ENCODE measurements at regions of chr9 and their contacts with region 1.

Region 1: DNA sequence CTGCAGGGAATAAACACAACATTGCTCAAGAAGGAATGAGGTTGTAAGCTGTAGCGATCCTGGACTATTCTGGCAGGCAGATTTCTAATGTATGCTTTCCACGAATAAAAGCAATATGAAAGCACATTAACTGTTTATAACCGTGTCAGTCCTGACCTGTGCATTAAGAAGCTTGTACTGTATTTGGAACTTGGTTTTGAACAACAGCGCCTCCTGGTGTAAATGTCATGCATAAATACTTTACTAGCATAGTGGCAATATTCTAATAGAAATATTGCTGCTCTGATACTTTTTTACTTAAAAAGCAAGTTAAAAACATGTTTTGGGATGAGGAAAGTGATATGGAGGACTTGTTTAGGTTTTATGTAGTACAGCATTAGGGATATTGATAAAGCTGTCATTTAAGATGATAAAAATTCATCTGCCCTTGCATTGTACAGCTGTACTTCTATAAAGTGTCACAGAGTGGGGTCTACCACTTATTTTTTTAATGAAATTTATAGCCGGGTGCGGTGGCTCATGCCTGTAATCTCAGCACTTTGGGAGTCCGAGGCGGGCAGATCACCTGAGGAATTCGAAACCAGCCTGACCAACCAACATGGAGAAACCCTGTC is 70.7 kb upstream of the GNE start:
- DNase-seq: no peak
- H3K4me3 ChIP-seq: no peak overlapping the region
- H3K27ac ChIP-seq: peak overlapping the region in 1 of 4 donors; percentile 6
- H3K4me1 ChIP-seq: peaks cover 0 to 15% (median 0%) of the 10 kb centered on the region in 3 donors
- H3K27me3 ChIP-seq: no peaks in the 10 kb centered on the region
- CTCF ChIP-seq: peak; percentile 62 to 94 (median 84)
- POLR2A ChIP-seq: no peak

Region 2: DNA sequence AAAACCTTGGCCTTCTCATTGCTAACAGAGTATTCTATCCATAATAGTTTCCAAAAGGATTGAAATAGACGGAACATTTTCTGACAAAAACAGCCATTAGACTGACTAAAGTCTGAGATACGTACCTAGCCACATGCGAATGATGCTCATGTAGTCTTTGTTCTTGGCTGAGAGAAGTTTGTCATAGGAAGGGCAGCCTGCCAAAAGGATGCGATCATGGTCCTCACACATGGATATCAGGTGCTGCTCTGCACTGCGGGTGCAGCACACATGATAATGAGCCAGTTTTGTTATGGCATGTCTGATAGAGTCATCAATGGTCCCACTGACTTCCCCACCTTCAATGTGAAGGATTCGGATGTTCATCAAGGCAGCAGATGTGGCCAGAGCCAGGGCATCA is 83.0 kb before region 1 on chr9:
- intact Hi-C with region 1: loop called (anchors 5 kb)
- DNase-seq: no peak
- H3K4me3 ChIP-seq: no peak overlapping the region
- H3K27ac ChIP-seq: no peak overlapping the region
- H3K4me1 ChIP-seq: peaks cover 0 to 28% (median 0%) of the 10 kb centered on the region in 3 donors
- H3K27me3 ChIP-seq: no peaks in the 10 kb centered on the region
- CTCF ChIP-seq: no peak
- POLR2A ChIP-seq: no peak